Prostate gland (tissue), 2 donors: ENCODE measurements at regions of chr15 and their contacts with region 1.

Region 1: GRCh38 chr15:72272213-72273002 is at the start of gene PARP6:
- DNase-seq: peak; percentile 95
- H3K4me3 ChIP-seq: peak within 1 kb of the TSS; percentile 83 to 85
- H3K27ac ChIP-seq: peak within 1 kb of the TSS; percentile 85 to 86
- H3K4me1 ChIP-seq: no peaks in the 10 kb centered on the region
- H3K27me3 ChIP-seq: no peaks in the 10 kb centered on the region
- CTCF ChIP-seq: peak in 3 of 4 experiments; percentile 59 to 85 (median 75)
- POLR2A ChIP-seq: peak; percentile 65
- total RNA-seq, gene PARP6: 34.4 to 85.8 TPM

Region 2: GRCh38 chr15:72199711-72200212 is 72.6 kb before region 1 on chr15:
- intact Hi-C with region 1: loop called (anchors 5 kb)
- DNase-seq: peak; percentile 87
- H3K4me3 ChIP-seq: no peak overlapping the region
- H3K27ac ChIP-seq: no peak overlapping the region
- H3K4me1 ChIP-seq: no peaks in the 10 kb centered on the region
- H3K27me3 ChIP-seq: no peaks in the 10 kb centered on the region
- CTCF ChIP-seq: peak; percentile 64 to 94 (median 88)
- POLR2A ChIP-seq: no peak

Region 3: DNA sequence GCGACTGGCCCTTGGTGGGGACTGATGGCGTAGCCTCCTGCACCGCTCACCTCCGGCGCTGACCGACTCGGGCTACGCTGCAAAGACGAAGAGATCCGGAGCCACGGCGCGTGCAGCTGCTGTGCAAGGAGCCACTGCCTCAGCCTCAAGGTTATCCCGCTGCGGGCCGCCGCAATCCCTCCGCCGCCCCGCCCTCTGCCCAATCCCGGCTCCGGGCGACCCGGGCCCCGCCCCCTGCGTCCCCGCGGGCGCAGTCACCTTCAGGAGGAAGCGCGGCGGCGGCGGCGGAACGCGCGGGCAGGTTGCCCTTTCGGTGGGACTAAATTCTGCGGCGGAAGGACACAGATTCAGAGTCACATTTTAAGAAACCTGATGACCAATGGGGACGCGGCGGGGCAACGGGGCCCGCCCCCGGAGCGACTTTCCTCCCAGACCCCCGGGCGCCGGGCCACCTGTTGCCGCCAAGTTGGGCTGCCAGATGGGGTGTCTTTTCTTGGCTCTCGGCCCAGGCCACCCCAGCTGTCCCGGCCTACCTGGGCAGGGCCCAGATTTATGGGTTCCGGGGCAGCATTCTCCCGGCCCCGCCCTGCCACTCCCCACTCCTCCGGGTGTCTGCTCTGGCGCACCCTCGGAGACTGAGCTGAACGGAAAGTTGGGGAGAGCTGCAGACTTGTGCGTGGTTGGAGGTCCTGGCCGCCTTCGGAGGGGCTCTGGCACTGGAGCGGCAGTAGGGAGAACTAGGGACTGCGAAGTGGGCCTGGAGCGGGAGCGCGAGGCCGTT is 41.2 kb before region 1 on chr15 and contains the start of gene PKM:
- intact Hi-C with region 1: loop called (anchors 5 kb)
- DNase-seq: peak; percentile 97
- H3K4me3 ChIP-seq: peak within 1 kb of the TSS; percentile 74 to 95
- H3K27ac ChIP-seq: peak within 1 kb of the TSS; percentile 96 to 98
- H3K4me1 ChIP-seq: peaks cover 23% of the 10 kb centered on the region
- H3K27me3 ChIP-seq: no peaks in the 10 kb centered on the region
- CTCF ChIP-seq: peak in 1 of 4 experiments; percentile 16
- POLR2A ChIP-seq: peak; percentile 96
- total RNA-seq, gene PKM: 470 to 513 TPM

Region 4: DNA sequence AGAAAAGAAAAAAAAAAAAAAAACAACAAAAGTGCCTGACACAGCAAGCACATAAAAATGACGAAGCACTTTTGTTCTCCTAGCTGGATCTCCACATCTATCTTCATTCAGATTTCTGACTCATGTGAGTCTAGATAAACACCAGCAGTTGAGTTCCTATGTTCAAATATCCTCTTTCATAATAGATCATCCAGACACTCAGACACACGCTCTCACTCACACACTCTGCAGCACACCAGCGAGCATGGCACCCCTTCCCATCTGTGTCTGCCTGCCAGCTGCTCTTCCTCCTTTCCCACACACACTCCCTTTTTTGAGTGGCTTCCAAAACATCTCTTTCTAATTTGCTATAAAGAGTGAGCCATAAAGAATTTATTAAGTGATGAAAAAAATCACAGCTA is 67.4 kb after region 1 on chr15:
- intact Hi-C with region 1: loop called (anchors 5 kb)
- DNase-seq: no peak
- H3K4me3 ChIP-seq: no peak overlapping the region
- H3K27ac ChIP-seq: peak overlapping the region; percentile 41 to 64
- H3K4me1 ChIP-seq: peaks cover 5% of the 10 kb centered on the region
- H3K27me3 ChIP-seq: no peaks in the 10 kb centered on the region
- CTCF ChIP-seq: no peak
- POLR2A ChIP-seq: no peak

Region 5: GRCh38 chr15:72375847-72376581 is 103.6 kb after region 1 on chr15 and contains the start of gene HEXA:
- intact Hi-C with region 1: loop called (anchors 2 kb)
- DNase-seq: peak; percentile 93
- H3K4me3 ChIP-seq: peak within 1 kb of the TSS; percentile 59 to 85
- H3K27ac ChIP-seq: peak within 1 kb of the TSS; percentile 84 to 88
- H3K4me1 ChIP-seq: no peaks in the 10 kb centered on the region
- H3K27me3 ChIP-seq: no peaks in the 10 kb centered on the region
- CTCF ChIP-seq: peak in 2 of 4 experiments; percentile 18 to 29
- POLR2A ChIP-seq: peak; percentile 70
- total RNA-seq, gene HEXA: 78.1 to 176 TPM

Region 6: DNA sequence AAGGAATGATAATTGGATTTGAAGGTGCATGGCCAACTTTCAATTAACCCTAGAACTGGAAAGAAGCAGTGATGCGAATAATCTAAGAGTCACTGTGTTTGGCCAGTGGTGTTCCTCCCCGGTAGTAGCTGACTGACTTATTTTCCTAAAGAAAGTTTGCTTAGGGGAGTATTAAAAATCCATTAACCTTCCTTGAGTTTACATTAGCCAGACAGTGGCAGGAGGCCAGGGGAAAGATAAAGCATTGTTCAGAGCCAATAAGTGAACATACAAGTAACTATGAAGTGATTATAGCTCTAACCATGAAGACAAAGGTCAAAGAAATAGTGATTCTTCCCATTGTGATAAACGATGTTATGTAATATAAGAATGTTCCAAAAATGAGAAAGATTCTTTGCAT is 116.8 kb after region 1 on chr15:
- intact Hi-C with region 1: no loop called
- DNase-seq: peak; percentile 68
- H3K4me3 ChIP-seq: no peak overlapping the region
- H3K27ac ChIP-seq: no peak overlapping the region
- H3K4me1 ChIP-seq: no peaks in the 10 kb centered on the region
- H3K27me3 ChIP-seq: no peaks in the 10 kb centered on the region
- CTCF ChIP-seq: no peak
- POLR2A ChIP-seq: no peak